ENCODE measurements at regions of chr14 and their contacts with region 1.

Region 1: GRCh38 chr14:64841121-64841651 is 38.5 kb downstream of the SPTB start:
- DNase-seq: peak; percentile 58
- ATAC-seq: peak; percentile 96
- H3K4me3 Mint-ChIP-seq: no peak overlapping the region
- H3K27ac Mint-ChIP-seq: peak overlapping the region; percentile 14
- H3K4me1 Mint-ChIP-seq: peaks cover 19% of the 10 kb centered on the region
- H3K27me3 Mint-ChIP-seq: no peaks in the 10 kb centered on the region
- CTCF ChIP-seq: peak; percentile 39; the same call in 1 of the 2 replicates

Region 2: GRCh38 chr14:64855721-64856528 is 14.7 kb after region 1 on chr14:
- CTCF ChIA-PET with region 1: interaction called, 14 read pairs
- POLR2A ChIA-PET with region 1: no interaction called
- DNase-seq: no peak
- ATAC-seq: peak; percentile 38
- H3K4me3 Mint-ChIP-seq: no peak overlapping the region
- H3K27ac Mint-ChIP-seq: peak overlapping the region; percentile 78
- H3K4me1 Mint-ChIP-seq: peaks cover 36% of the 10 kb centered on the region
- H3K27me3 Mint-ChIP-seq: no peaks in the 10 kb centered on the region
- CTCF ChIP-seq: no peak

Region 3: GRCh38 chr14:64868379-64868778 is 27.2 kb after region 1 on chr14:
- CTCF ChIA-PET with region 1: interaction called, 11 read pairs
- POLR2A ChIA-PET with region 1: no interaction called
- DNase-seq: no peak
- ATAC-seq: no peak
- H3K4me3 Mint-ChIP-seq: no peak overlapping the region
- H3K27ac Mint-ChIP-seq: no peak overlapping the region
- H3K4me1 Mint-ChIP-seq: peaks cover 15% of the 10 kb centered on the region
- H3K27me3 Mint-ChIP-seq: no peaks in the 10 kb centered on the region; the same call in 1 of the 2 replicates
- CTCF ChIP-seq: no peak

Region 4: GRCh38 chr14:64880221-64881121 is 39.3 kb after region 1 on chr14:
- CTCF ChIA-PET with region 1: interaction called, 35 read pairs
- POLR2A ChIA-PET with region 1: interaction called, 5 read pairs
- DNase-seq: peak; percentile 77
- ATAC-seq: peak; percentile 85
- H3K4me3 Mint-ChIP-seq: peak overlapping the region; percentile 88
- H3K27ac Mint-ChIP-seq: peak overlapping the region; percentile 41; the same call in 1 of the 2 replicates
- H3K4me1 Mint-ChIP-seq: peaks cover 18% of the 10 kb centered on the region
- H3K27me3 Mint-ChIP-seq: peaks cover 70% of the 10 kb centered on the region
- CTCF ChIP-seq: no peak